Naive thymus-derived CD4-positive, alpha-beta T cell (primary cell): ENCODE measurements at regions of chr1 and their contacts with region 1.

Region 1: GRCh38 chr1:51878616-51879336 is at the start of gene NRDC:
- DNase-seq: peak; percentile 95 to 100 (median 99)
- ATAC-seq: peak; percentile 95
- H3K4me3 ChIP-seq: peak within 1 kb of the TSS; percentile 87
- H3K4me3 Mint-ChIP-seq: no peak within 1 kb of the TSS
- H3K27ac ChIP-seq: peak within 1 kb of the TSS; percentile 98
- H3K27ac Mint-ChIP-seq: no peak within 1 kb of the TSS
- H3K4me1 ChIP-seq: peaks cover 16 to 26% of the 10 kb centered on the region in 2 donors
- H3K4me1 Mint-ChIP-seq: peaks cover 0 to 30% (median 17%) of the 10 kb centered on the region in 7 donors
- H3K27me3 ChIP-seq: no peaks in the 10 kb centered on the region
- H3K27me3 Mint-ChIP-seq: peaks cover 7 to 15% (median 10%) of the 10 kb centered on the region in 5 donors
- total RNA-seq, gene NRDC: 93.1 to 194 (median 122) TPM

Region 2: GRCh38 chr1:50968158-50968820 is 910.5 kb before region 1 on chr1:
- CTCF ChIA-PET with region 1: no interaction called
- POLR2A ChIA-PET with region 1: no interaction called
- intact Hi-C with region 1: loop called (anchors 2 kb)
- DNase-seq: peak; percentile 67 to 86 (median 85)
- ATAC-seq: peak; percentile 89
- H3K4me3 ChIP-seq: peak overlapping the region; percentile 83
- H3K4me3 Mint-ChIP-seq: peak overlapping the region; percentile 92 to 99 (median 98)
- H3K27ac ChIP-seq: peak overlapping the region; percentile 96
- H3K27ac Mint-ChIP-seq: peak overlapping the region; percentile 71 to 100 (median 91)
- H3K4me1 ChIP-seq: peaks cover 6 to 15% of the 10 kb centered on the region in 2 donors
- H3K4me1 Mint-ChIP-seq: peaks cover 18 to 29% (median 26%) of the 10 kb centered on the region in 7 donors
- H3K27me3 ChIP-seq: no peaks in the 10 kb centered on the region
- H3K27me3 Mint-ChIP-seq: peaks cover 0 to 12% (median 2%) of the 10 kb centered on the region in 5 donors

Region 3: DNA sequence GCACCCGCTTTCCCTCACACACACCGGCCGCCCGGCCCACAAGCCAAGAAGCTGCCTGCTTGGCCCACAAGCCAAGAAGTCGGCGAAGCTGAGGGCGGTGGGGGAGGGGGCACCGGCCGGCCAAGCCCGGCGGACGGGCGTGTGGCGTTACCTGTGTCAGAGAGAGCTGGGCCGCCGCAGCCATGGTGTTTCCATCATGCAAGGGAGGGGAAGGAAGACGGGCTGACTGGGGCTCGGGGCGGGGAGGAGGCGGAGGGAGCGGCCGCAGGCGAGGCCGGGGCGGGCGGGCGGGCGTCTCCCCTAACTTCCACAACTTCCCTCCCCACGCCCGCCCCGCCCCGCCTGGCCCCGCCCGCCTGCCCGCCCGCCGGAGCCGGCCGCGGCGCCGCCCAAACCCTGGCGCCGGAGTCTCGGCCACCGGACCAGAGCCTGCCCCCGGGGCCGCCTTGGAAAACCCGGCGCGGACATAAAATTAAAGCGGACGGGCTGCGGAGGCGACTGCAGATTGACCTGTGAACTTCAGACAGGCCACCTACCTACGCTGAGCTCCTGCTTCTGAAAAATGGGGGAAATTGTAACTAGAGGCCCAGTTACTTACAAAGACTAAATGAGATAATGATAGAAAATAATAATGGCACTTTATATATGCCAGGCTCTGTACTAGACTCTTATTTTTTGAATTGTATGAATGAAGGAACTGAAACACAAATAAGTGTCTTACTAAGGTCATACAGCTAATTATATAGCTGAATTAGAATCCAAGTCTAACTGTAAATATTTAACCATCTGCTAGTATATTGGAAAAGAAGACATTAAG is 359.5 kb before region 1 on chr1 and contains the start of gene EPS15:
- CTCF ChIA-PET with region 1: no interaction called
- POLR2A ChIA-PET with region 1: interaction called, 3 read pairs
- intact Hi-C with region 1: loop called (anchors 2 kb)
- DNase-seq: peak; percentile 62 to 90 (median 77)
- ATAC-seq: peak; percentile 86
- H3K4me3 ChIP-seq: peak within 1 kb of the TSS; percentile 87
- H3K4me3 Mint-ChIP-seq: peak within 1 kb of the TSS; percentile 89 to 97 (median 94)
- H3K27ac ChIP-seq: peak within 1 kb of the TSS; percentile 66
- H3K27ac Mint-ChIP-seq: peak within 1 kb of the TSS; percentile 86 to 95 (median 90)
- H3K4me1 ChIP-seq: peaks cover 31 to 34% of the 10 kb centered on the region in 2 donors
- H3K4me1 Mint-ChIP-seq: peaks cover 46 to 58% (median 55%) of the 10 kb centered on the region in 7 donors
- H3K27me3 ChIP-seq: no peaks in the 10 kb centered on the region
- H3K27me3 Mint-ChIP-seq: no peaks in the 10 kb centered on the region
- total RNA-seq, gene EPS15: 44.8 to 79.9 (median 53.5) TPM

Region 4: GRCh38 chr1:51729156-51729823 is 149.5 kb before region 1 on chr1:
- CTCF ChIA-PET with region 1: no interaction called
- POLR2A ChIA-PET with region 1: interaction called, 5 read pairs
- intact Hi-C with region 1: loop called (anchors 1 kb)
- DNase-seq: peak; percentile 73 to 95 (median 88)
- ATAC-seq: peak; percentile 96
- H3K4me3 ChIP-seq: peak overlapping the region; percentile 87
- H3K4me3 Mint-ChIP-seq: peak overlapping the region; percentile 88 to 94 (median 92)
- H3K27ac ChIP-seq: peak overlapping the region; percentile 78
- H3K27ac Mint-ChIP-seq: peak overlapping the region; percentile 77 to 93 (median 89)
- H3K4me1 ChIP-seq: peaks cover 11 to 19% of the 10 kb centered on the region in 2 donors
- H3K4me1 Mint-ChIP-seq: peaks cover 17 to 56% (median 48%) of the 10 kb centered on the region in 7 donors
- H3K27me3 ChIP-seq: no peaks in the 10 kb centered on the region
- H3K27me3 Mint-ChIP-seq: no peaks in the 10 kb centered on the region

Region 5: GRCh38 chr1:51799372-51799771 is 79.4 kb before region 1 on chr1:
- CTCF ChIA-PET with region 1: no interaction called
- POLR2A ChIA-PET with region 1: no interaction called
- intact Hi-C with region 1: no loop called
- DNase-seq: no peak
- ATAC-seq: no peak
- H3K4me3 ChIP-seq: no peak overlapping the region
- H3K4me3 Mint-ChIP-seq: no peak overlapping the region
- H3K27ac ChIP-seq: no peak overlapping the region
- H3K27ac Mint-ChIP-seq: no peak overlapping the region
- H3K4me1 ChIP-seq: no peaks in the 10 kb centered on the region
- H3K4me1 Mint-ChIP-seq: no peaks in the 10 kb centered on the region
- H3K27me3 ChIP-seq: no peaks in the 10 kb centered on the region
- H3K27me3 Mint-ChIP-seq: no peaks in the 10 kb centered on the region

Region 6: DNA sequence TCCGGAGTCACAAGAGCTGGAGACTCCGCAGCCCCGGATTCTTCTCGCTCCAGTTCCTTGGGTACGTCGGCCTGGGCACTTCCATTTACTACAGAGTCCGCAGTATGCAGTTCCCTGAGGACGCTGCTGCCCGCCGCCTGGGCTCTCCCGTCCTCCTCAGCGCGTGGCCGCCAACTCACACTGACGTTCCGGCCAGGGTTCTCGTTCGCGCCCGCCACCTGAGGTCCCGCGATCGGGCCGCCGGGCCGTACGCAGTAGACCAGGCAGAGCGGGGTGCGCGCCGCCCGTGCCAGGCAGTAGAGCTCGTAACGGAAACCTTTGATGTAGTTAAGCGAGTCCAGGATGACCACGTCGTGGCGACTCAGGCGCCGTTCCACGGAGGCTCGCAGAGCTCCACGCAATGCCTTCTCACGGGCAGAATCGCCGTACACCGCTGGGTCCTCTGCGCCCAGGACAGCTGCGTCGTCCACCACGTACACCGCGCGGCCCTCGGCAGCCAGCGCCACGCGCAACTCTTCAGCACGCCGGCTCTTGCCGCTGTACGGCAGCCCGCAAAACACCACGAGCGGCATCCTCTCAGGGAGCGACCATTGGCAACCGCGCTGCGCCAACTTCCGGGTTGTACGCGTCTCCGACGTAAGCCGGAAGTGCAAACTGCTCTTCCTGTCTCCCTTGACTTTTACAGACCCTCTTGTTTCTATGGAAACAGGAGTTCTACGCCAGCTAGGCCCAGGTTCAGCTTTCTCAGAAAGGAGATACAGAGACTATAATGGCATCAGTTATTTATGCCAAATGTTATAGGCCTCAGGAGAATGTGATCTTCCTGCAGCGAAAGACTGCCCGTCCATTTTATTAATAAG is 154.6 kb after region 1 on chr1 and contains the start of gene KTI12:
- CTCF ChIA-PET with region 1: no interaction called
- POLR2A ChIA-PET with region 1: interaction called, 8 read pairs
- intact Hi-C with region 1: loop called (anchors 1 kb)
- DNase-seq: peak; percentile 72 to 92 (median 89)
- ATAC-seq: peak; percentile 95
- H3K4me3 ChIP-seq: peak within 1 kb of the TSS; percentile 94
- H3K4me3 Mint-ChIP-seq: peak within 1 kb of the TSS; percentile 91 to 96 (median 93)
- H3K27ac ChIP-seq: peak within 1 kb of the TSS; percentile 73
- H3K27ac Mint-ChIP-seq: peak within 1 kb of the TSS; percentile 92 to 97 (median 96)
- H3K4me1 ChIP-seq: peaks cover 20 to 22% of the 10 kb centered on the region in 2 donors
- H3K4me1 Mint-ChIP-seq: peaks cover 18 to 52% (median 38%) of the 10 kb centered on the region in 7 donors
- H3K27me3 ChIP-seq: no peaks in the 10 kb centered on the region
- H3K27me3 Mint-ChIP-seq: no peaks in the 10 kb centered on the region
- total RNA-seq, gene KTI12: 14.5 to 23.5 (median 16.5) TPM

Region 7: GRCh38 chr1:53196485-53197270 is 1317.9 kb after region 1 on chr1 and contains the start of gene CPT2:
- CTCF ChIA-PET with region 1: no interaction called
- POLR2A ChIA-PET with region 1: no interaction called
- intact Hi-C with region 1: loop called (anchors 2 to 5 kb)
- DNase-seq: peak; percentile 78 to 94 (median 89)
- ATAC-seq: peak; percentile 99
- H3K4me3 ChIP-seq: peak within 1 kb of the TSS; percentile 91
- H3K4me3 Mint-ChIP-seq: peak within 1 kb of the TSS; percentile 88 to 100 (median 98)
- H3K27ac ChIP-seq: peak within 1 kb of the TSS; percentile 98
- H3K27ac Mint-ChIP-seq: peak within 1 kb of the TSS; percentile 90 to 100 (median 97)
- H3K4me1 ChIP-seq: peaks cover 16 to 20% of the 10 kb centered on the region in 2 donors
- H3K4me1 Mint-ChIP-seq: peaks cover 13 to 48% (median 44%) of the 10 kb centered on the region in 7 donors
- H3K27me3 ChIP-seq: no peaks in the 10 kb centered on the region
- H3K27me3 Mint-ChIP-seq: no peaks in the 10 kb centered on the region
- total RNA-seq, gene CPT2: 8.8 to 23.0 (median 13.4) TPM

Region 8: GRCh38 chr1:53837924-53838652 is 1959.3 kb after region 1 on chr1 and contains the start of gene NDC1:
- CTCF ChIA-PET with region 1: no interaction called
- POLR2A ChIA-PET with region 1: no interaction called
- intact Hi-C with region 1: loop called in 1 of 2 experiments (anchors 1 kb)
- DNase-seq: peak; percentile 84 to 95 (median 92)
- ATAC-seq: peak; percentile 95
- H3K4me3 ChIP-seq: peak within 1 kb of the TSS; percentile 92
- H3K4me3 Mint-ChIP-seq: peak within 1 kb of the TSS; percentile 96 to 100 (median 99)
- H3K27ac ChIP-seq: peak within 1 kb of the TSS; percentile 95
- H3K27ac Mint-ChIP-seq: peak within 1 kb of the TSS; percentile 96 to 99 (median 98)
- H3K4me1 ChIP-seq: no peaks in the 10 kb centered on the region
- H3K4me1 Mint-ChIP-seq: peaks cover 10 to 41% (median 30%) of the 10 kb centered on the region in 7 donors
- H3K27me3 ChIP-seq: no peaks in the 10 kb centered on the region
- H3K27me3 Mint-ChIP-seq: no peaks in the 10 kb centered on the region
- total RNA-seq, gene NDC1: 6.9 to 20.2 (median 13.2) TPM